Activated CD8-positive, alpha-beta T cell treated with anti-CD3 and anti-CD28 coated beads for 36 hours (primary cell): ENCODE measurements at regions of chr10 and their contacts with region 1.

Region 1: GRCh38 chr10:21959998-21960397 is 43.5 kb downstream of the DNAJC1 start:
- DNase-seq: no peak
- ATAC-seq: no peak
- H3K4me3 Mint-ChIP-seq: no peak overlapping the region
- H3K27ac Mint-ChIP-seq: no peak overlapping the region
- H3K4me1 Mint-ChIP-seq: peaks cover 16% of the 10 kb centered on the region
- H3K27me3 Mint-ChIP-seq: no peaks in the 10 kb centered on the region
- CTCF ChIP-seq: no peak

Region 2: GRCh38 chr10:21278491-21279239 is 681.3 kb before region 1 on chr10:
- CTCF ChIA-PET with region 1: no interaction called
- POLR2A ChIA-PET with region 1: no interaction called
- intact Hi-C with region 1: loop called (anchors 5 kb)
- DNase-seq: peak; percentile 92
- ATAC-seq: peak; percentile 78
- H3K4me3 Mint-ChIP-seq: no peak overlapping the region
- H3K27ac Mint-ChIP-seq: no peak overlapping the region
- H3K4me1 Mint-ChIP-seq: no peaks in the 10 kb centered on the region
- H3K27me3 Mint-ChIP-seq: peaks cover 3% of the 10 kb centered on the region
- CTCF ChIP-seq: peak; percentile 71